Activated CD4-positive, alpha-beta T cell treated with anti-CD3 and anti-CD28 coated beads, Interleukin-2, amount 10 ng/mL, durations not matched to agents 24 days and 14 days (primary cell): ENCODE measurements at regions of chr5 and their contacts with region 1.

Region 1: DNA sequence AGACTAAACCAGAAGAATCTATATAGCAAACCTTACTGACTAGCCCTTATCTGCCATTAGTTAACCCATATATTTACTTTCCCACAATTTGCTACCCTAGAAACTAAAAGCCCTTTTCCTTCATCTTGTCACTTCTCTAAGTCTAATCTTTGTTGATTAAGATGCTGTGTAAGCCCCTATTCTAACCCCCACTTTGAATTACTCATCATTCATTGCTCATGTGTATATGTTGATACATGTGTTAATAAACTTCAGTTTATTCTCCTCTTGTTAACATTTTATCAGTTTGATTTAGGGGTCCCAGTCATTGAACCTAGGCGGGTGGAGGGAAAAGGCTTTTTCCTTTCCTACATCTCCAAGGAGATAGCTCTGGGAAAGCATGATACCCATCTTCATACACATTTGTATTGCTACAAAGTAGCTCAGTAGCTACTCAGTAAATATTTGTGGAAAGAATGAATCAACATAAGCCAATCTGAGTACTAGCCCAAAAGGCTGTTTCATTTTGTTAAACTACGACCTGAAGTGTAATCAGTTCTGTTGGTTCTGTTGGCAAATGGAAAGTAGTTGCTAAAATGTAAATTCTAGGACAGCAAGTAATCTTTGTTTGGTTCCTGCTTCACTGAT is 35.1 kb upstream of the NDFIP1 start:
- DNase-seq: no peak
- H3K4me3 Mint-ChIP-seq: no peak overlapping the region
- H3K27ac Mint-ChIP-seq: peak overlapping the region; percentile 89
- H3K4me1 Mint-ChIP-seq: peaks cover 31% of the 10 kb centered on the region
- H3K27me3 Mint-ChIP-seq: no peaks in the 10 kb centered on the region

Region 2: DNA sequence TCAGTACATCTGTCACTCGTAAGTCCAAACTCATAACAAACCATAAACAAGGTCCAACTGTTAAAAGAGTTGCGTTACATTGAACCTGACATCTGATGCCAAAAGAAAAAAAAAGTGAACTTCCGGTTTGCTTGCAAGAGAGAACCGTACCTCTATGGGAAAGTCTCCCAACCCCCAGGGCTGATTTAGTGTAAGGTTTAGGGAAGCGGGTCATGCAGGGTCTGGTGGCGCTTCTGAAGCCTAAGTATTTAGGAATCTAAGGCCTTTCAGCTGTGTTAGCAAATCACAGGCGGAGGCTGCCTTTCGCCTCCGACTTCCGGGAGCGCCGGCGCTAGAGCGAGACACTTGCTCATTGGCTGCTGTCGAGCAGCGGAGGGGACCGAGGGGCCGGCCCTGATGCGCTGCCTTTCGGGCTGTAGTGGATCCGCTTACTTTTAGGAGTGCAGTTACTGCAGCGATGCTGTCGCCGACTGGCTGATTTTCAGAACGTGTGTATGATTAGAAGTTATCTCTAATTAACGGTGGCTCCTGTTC is 48.6 kb before region 1 on chr5:
- intact Hi-C with region 1: loop called (anchors 2 kb)
- DNase-seq: peak; percentile 96
- H3K4me3 Mint-ChIP-seq: peak overlapping the region; percentile 90
- H3K27ac Mint-ChIP-seq: peak overlapping the region; percentile 98
- H3K4me1 Mint-ChIP-seq: peaks cover 14% of the 10 kb centered on the region
- H3K27me3 Mint-ChIP-seq: no peaks in the 10 kb centered on the region

Region 3: GRCh38 chr5:142053426-142054151 is 19.9 kb before region 1 on chr5:
- intact Hi-C with region 1: loop called (anchors 2 kb)
- DNase-seq: no peak
- H3K4me3 Mint-ChIP-seq: no peak overlapping the region
- H3K27ac Mint-ChIP-seq: no peak overlapping the region
- H3K4me1 Mint-ChIP-seq: peaks cover 8% of the 10 kb centered on the region
- H3K27me3 Mint-ChIP-seq: no peaks in the 10 kb centered on the region

Region 4: DNA sequence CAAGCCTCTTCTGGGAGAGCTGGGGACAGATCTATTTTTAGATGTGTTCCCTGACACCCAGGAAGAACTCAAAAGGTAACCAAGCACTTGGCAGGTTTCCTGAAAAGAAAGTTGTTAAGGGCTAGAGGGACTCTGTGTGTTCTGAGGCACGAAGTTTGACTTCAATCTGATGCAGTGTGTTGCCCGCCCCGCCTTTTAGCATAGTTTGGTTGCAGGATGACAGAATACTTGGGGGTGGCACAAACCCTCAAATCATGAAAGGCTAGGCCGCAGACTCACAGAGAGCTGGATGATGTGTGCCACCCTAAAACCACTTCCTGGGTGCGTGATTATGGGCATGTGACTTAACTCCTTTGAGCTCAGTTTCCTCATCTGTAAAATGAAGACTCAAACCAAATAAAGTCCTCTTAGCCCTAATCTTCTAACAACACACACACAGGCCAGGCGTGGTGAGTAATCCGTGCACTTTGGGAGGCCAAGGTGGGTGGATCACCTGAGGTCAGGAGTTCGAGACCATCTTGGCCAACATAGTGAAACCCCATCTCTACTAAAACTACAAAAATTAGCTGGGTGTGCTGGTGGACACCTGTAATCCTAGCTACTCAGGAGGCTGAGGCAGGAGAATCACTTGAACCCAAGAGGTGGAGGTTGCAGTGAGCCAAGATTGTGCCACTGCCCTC is 22.3 kb after region 1 on chr5:
- intact Hi-C with region 1: loop called (anchors 2 kb)
- DNase-seq: peak; percentile 89
- H3K4me3 Mint-ChIP-seq: peak overlapping the region; percentile 53
- H3K27ac Mint-ChIP-seq: peak overlapping the region; percentile 93
- H3K4me1 Mint-ChIP-seq: peaks cover 46% of the 10 kb centered on the region
- H3K27me3 Mint-ChIP-seq: no peaks in the 10 kb centered on the region